ENCODE measurements at regions of chr17 and their contacts with region 1.

Region 1: DNA sequence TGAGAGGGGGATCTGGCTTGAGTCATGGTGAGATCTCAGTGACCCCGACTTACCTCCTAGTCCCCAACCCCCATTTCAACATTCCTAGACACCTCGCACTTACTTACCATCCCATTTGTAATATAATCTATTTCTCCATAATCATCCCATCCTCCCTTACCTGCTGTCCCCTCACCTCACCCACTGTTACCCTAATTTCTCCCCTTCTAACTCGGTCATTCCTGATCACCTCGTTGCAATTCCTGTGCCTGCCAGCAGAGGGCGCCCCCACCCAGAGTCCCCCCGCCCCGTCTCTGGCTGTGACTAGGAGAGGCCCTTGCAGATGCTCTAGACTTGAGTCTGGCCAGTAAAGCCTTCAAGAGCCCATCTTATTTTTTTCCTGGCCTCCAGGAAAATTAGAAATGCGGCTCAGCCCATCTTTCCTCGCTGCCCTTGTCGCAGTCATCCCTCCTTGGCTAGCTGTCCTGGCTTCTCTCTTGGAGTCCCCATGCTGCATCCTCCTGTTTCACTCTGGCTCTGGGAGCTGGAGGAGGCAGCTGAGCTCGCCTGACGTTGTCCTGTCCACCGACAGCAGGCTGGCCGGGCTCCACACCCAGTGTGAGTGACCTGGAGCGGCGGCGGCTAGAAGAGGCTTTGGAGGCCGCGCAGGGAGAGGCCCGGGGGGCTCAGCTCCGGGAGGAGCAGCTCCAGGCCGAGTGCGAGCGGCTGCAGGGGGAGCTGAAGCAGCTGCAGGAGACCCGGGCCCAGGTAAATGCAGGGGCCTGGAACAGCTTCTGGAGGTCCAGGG is 5.0 kb downstream of the TBKBP1 start:
- DNase-seq: peak; percentile 87

Region 2: DNA sequence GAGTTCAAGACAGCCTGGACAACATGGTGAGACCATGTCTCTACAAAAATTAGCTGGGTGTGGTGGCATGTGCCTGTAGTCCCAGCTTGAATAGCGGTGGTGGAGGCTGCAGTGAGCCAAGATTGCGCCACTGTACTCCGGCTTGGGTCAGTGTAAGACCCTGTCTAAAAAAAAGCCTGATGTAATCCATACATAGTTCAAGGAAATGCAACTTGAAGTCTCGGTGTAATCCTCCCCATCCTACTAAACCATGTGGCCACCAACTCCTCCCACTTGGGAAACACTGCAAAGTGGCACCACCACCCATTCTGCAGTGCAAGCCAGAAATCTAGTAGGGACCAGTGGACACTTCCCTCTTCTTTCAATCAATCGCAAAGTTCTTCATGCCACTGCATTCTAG is 54.6 kb before region 1 on chr17:
- intact Hi-C with region 1: no loop called
- DNase-seq: no peak

Region 3: GRCh38 chr17:47676551-47677165 is 22.3 kb before region 1 on chr17:
- intact Hi-C with region 1: no loop called
- DNase-seq: no peak

Region 4: GRCh38 chr17:47687748-47688147 is 11.2 kb before region 1 on chr17:
- intact Hi-C with region 1: no loop called
- DNase-seq: no peak

Region 5: GRCh38 chr17:47810205-47810821 is 111.4 kb after region 1 on chr17:
- intact Hi-C with region 1: loop called in 1 of 2 experiments (anchors 5 kb)
- DNase-seq: peak; percentile 66

Region 6: DNA sequence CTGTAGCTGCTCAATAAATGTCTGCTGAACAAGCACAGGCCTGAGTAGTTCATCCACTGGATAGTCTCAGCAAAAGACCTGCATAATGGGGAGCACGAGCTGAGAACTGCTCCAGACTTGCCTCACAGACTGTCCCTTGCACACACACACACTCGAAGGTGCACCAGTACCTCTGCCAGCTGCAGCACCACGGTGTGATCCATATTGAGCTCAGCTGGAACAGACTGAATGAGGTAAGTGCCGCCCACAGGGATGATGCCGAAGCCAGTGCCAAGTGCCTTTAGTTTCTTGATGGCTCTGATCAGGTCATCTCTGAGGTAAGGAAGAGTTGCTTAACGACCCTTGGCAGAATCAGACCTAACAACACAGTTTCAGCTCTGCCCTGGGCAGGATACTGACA is 1234.1 kb after region 1 on chr17:
- intact Hi-C with region 1: no loop called
- DNase-seq: no peak